HCT116 (cell line): ENCODE measurements at regions of chr7 and their contacts with region 1.

Region 1: DNA sequence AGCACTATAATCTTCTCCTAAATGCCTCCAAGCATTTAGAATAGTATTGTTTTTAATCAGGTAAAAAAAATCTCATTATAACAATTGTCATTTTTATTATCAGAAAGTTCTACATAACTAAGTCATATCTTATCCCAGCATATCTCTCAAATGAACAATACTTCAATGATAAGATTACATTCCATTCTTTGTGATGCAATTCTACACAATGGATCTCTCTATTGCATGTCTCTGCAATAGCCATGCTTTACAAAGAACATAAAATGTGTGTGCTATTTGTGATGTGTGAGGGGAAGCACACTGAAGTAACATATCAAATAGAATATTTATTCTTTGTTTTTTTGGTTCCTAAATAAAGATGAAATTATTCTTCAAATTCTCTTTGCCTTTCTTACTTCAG is 195.7 kb downstream of the TSPAN12 start:
- DNase-seq: no peak
- ATAC-seq: no peak
- H3K4me3 ChIP-seq: no peak overlapping the region
- H3K27ac ChIP-seq: no peak overlapping the region
- H3K4me1 ChIP-seq: no peaks in the 10 kb centered on the region
- H3K27me3 ChIP-seq: no peaks in the 10 kb centered on the region
- CTCF ChIP-seq: no peak
- POLR2A ChIP-seq: no peak
- RAD21 ChIP-seq: no peak

Region 2: DNA sequence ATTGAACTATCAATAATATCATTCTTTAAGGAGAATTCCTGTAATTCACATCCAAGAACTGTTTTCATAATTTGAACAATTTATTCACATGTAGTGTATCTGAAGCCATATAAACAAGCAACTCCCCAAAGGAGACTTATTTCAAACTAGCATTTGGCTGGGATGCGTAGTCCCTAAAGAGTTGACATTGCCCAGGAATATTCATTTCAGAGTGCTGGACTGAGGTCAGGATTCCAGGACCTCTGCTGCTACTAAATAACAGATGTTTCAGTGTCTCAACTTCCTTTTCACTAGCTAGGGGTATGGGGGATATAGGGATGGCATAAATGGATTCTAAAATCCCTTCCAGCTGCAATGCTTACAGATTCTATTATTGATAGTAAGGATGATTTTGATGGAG is 18.7 kb after region 1 on chr7:
- CTCF ChIA-PET with region 1: no interaction called
- POLR2A ChIA-PET with region 1: no interaction called
- RAD21 ChIA-PET with region 1: no interaction called
- intact Hi-C with region 1: loop called (anchors 1 kb)
- DNase-seq: no peak
- ATAC-seq: no peak
- H3K4me3 ChIP-seq: no peak overlapping the region
- H3K27ac ChIP-seq: no peak overlapping the region
- H3K4me1 ChIP-seq: no peaks in the 10 kb centered on the region
- H3K27me3 ChIP-seq: no peaks in the 10 kb centered on the region
- CTCF ChIP-seq: no peak
- POLR2A ChIP-seq: no peak
- RAD21 ChIP-seq: no peak